ENCODE measurements at regions of chr19 and their contacts with region 1.

Region 1: GRCh38 chr19:41206926-41207750 is 11.9 kb upstream of the AXL start:
- DNase-seq: no peak
- H3K4me3 Mint-ChIP-seq: no peak overlapping the region
- H3K27ac Mint-ChIP-seq: peak overlapping the region; percentile 61
- H3K4me1 Mint-ChIP-seq: peaks cover 17% of the 10 kb centered on the region
- H3K27me3 Mint-ChIP-seq: no peaks in the 10 kb centered on the region
- CTCF ChIP-seq: no peak

Region 2: GRCh38 chr19:41245843-41246242 is 38.7 kb after region 1 on chr19:
- CTCF ChIA-PET with region 1: interaction called, 10 read pairs
- POLR2A ChIA-PET with region 1: interaction called, 3 read pairs
- intact Hi-C with region 1: no loop called
- DNase-seq: no peak
- H3K4me3 Mint-ChIP-seq: no peak overlapping the region
- H3K27ac Mint-ChIP-seq: no peak overlapping the region
- H3K4me1 Mint-ChIP-seq: no peaks in the 10 kb centered on the region
- H3K27me3 Mint-ChIP-seq: no peaks in the 10 kb centered on the region
- CTCF ChIP-seq: no peak

Region 3: GRCh38 chr19:41278478-41278877 is 71.3 kb after region 1 on chr19:
- CTCF ChIA-PET with region 1: no interaction called
- POLR2A ChIA-PET with region 1: no interaction called
- intact Hi-C with region 1: no loop called
- DNase-seq: no peak
- H3K4me3 Mint-ChIP-seq: no peak overlapping the region
- H3K27ac Mint-ChIP-seq: no peak overlapping the region
- H3K4me1 Mint-ChIP-seq: no peaks in the 10 kb centered on the region
- H3K27me3 Mint-ChIP-seq: no peaks in the 10 kb centered on the region
- CTCF ChIP-seq: no peak

Region 4: GRCh38 chr19:41353466-41354342 is 146.6 kb after region 1 on chr19 and contains the start of gene TGFB1:
- CTCF ChIA-PET with region 1: no interaction called
- POLR2A ChIA-PET with region 1: interaction called, 3 read pairs
- intact Hi-C with region 1: loop called (anchors 1 kb)
- DNase-seq: peak; percentile 84
- H3K4me3 Mint-ChIP-seq: peak within 1 kb of the TSS; percentile 98
- H3K27ac Mint-ChIP-seq: no peak within 1 kb of the TSS
- H3K4me1 Mint-ChIP-seq: peaks cover 24% of the 10 kb centered on the region
- H3K27me3 Mint-ChIP-seq: no peaks in the 10 kb centered on the region
- CTCF ChIP-seq: peak; percentile 92
- total RNA-seq, gene TGFB1: 27.8 and 33.7 TPM in 2 replicates

Measured in MCF 10A (cell line).